CD4-positive, alpha-beta T cell (primary cell): ENCODE measurements at regions of chr5 and their contacts with region 1.

Region 1: GRCh38 chr5:181260387-181261319 is at the start of gene TRIM52:
- DNase-seq: peak; percentile 84 to 96 (median 89)
- ATAC-seq: peak; percentile 73
- H3K4me3 ChIP-seq: peak within 1 kb of the TSS; percentile 85
- H3K4me3 Mint-ChIP-seq: peak within 1 kb of the TSS; percentile 100
- H3K27ac ChIP-seq: peak within 1 kb of the TSS; percentile 98 to 99
- H3K27ac Mint-ChIP-seq: peak within 1 kb of the TSS; percentile 95
- H3K4me1 ChIP-seq: peaks cover 43% of the 10 kb centered on the region
- H3K4me1 Mint-ChIP-seq: peaks cover 54% of the 10 kb centered on the region
- H3K27me3 ChIP-seq: no peaks in the 10 kb centered on the region
- H3K27me3 Mint-ChIP-seq: no peaks in the 10 kb centered on the region
- CTCF ChIP-seq: no peak
- total RNA-seq, gene TRIM52: 35.9 to 37.6 TPM

Region 2: GRCh38 chr5:180810210-180810958 is 450.3 kb before region 1 on chr5:
- CTCF ChIA-PET with region 1: no interaction called
- POLR2A ChIA-PET with region 1: interaction called, 10 read pairs
- intact Hi-C with region 1: no loop called
- DNase-seq: peak; percentile 94 to 98 (median 97)
- ATAC-seq: peak; percentile 76
- H3K4me3 ChIP-seq: peak overlapping the region; percentile 80
- H3K4me3 Mint-ChIP-seq: peak overlapping the region; percentile 91
- H3K27ac ChIP-seq: peak overlapping the region; percentile 95 to 98
- H3K27ac Mint-ChIP-seq: peak overlapping the region; percentile 94
- H3K4me1 ChIP-seq: peaks cover 58% of the 10 kb centered on the region
- H3K4me1 Mint-ChIP-seq: peaks cover 87% of the 10 kb centered on the region
- H3K27me3 ChIP-seq: no peaks in the 10 kb centered on the region
- H3K27me3 Mint-ChIP-seq: no peaks in the 10 kb centered on the region
- CTCF ChIP-seq: no peak

Region 3: DNA sequence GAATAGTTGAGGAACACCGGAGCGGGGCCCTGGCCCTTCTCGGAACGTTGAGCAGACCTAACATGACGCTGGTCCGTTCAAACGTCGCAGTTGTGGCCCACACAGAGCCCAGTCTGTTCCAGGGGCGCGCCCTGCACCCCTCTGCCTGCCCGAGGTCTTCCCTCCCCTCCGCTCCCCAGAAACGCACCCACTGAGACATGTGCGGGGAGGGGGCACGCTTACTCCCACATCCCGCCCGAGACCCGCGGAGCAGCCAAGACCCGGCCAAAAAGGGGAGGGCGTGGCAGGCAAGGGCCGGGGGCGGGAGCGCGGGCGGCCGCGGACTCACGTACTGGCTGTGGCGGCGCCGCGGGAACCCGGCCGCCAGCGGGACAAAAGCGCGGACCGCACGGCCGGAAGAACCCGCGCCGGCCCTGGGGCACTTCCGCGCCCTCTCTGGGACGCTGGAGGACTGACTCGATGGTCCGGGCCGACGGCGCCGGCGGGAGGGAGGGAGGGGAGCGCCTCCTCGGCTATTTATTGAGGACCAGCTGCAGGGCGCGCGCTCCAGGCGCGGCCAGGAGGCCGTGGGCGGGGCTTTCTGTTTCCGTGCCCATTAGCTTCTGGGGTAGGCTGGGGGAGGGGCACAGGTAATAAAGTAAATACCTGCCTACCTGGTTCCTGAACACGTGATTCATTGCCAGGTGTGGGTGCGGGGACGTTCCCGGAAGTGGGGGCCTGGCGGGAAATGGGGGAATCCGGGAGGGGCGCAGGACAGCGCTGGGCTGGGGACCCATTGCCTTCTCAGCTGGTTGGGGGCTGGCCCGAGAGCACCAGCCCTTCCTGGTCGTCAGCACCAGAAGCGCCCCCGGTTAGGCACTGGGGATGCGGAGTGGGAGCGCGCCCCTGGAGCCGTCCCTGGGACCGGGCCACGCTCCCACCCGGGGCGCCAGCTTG is 399.5 kb before region 1 on chr5 and contains the start of gene ZFP62:
- CTCF ChIA-PET with region 1: no interaction called
- POLR2A ChIA-PET with region 1: no interaction called
- intact Hi-C with region 1: loop called in 1 of 2 experiments (anchors 5 kb)
- DNase-seq: peak; percentile 78 to 94 (median 85)
- ATAC-seq: peak; percentile 73
- H3K4me3 ChIP-seq: peak within 1 kb of the TSS; percentile 89
- H3K4me3 Mint-ChIP-seq: peak within 1 kb of the TSS; percentile 95
- H3K27ac ChIP-seq: peak within 1 kb of the TSS; percentile 85 to 88
- H3K27ac Mint-ChIP-seq: peak within 1 kb of the TSS; percentile 95
- H3K4me1 ChIP-seq: peaks cover 10% of the 10 kb centered on the region
- H3K4me1 Mint-ChIP-seq: peaks cover 27% of the 10 kb centered on the region
- H3K27me3 ChIP-seq: no peaks in the 10 kb centered on the region
- H3K27me3 Mint-ChIP-seq: peaks cover 5% of the 10 kb centered on the region
- CTCF ChIP-seq: peak; percentile 50
- total RNA-seq, gene ZFP62: 22.6 to 24.9 TPM

Region 4: DNA sequence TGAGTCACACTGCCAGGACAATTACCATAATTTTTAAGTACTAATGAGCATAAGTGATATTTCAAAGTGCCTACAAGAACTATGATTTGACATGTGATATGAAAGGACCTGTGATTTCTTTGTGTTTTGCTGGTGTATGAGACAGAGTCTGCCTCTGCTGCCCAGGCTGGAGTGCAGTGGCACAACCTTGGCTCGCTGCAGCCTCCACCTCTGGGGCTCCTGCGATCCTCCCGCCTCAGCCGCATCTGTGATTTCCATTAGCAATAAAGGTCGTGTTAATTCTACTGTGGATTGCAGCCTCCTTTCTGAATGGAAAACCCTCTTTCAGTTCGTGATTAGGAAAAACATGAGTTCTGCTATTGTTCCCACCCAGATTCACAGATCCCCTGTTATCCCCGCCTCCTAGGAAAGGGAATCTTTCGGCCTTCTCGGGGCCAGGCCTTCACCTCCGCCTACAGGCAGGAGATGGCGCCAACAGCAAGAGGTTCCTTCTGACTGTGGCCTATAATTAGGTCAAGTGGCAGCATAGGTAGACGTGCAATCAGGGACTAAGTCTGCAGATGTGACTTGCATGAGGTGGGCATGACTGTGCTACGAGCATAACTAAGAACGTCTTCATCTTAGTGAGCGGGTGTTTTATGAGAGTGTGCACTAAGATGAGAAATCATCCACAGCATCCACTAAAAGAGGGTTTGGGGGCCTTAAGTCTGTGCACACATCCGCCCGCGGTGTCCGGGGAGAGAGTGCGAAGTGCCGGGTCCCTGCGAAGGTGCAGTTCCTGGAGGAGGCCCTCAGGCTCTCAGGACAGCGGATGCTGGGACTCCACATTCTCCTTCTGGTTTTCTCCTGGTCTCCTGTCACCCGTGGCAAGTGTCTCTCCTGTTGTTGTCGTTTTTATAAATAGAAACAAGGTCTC is 78.7 kb before region 1 on chr5:
- CTCF ChIA-PET with region 1: interaction called, 23 read pairs
- POLR2A ChIA-PET with region 1: interaction called, 48 read pairs
- intact Hi-C with region 1: no loop called
- DNase-seq: peak; percentile 46 to 88 (median 58)
- ATAC-seq: peak; percentile 59
- H3K4me3 ChIP-seq: no peak overlapping the region
- H3K4me3 Mint-ChIP-seq: peak overlapping the region; percentile 86
- H3K27ac ChIP-seq: no peak overlapping the region
- H3K27ac Mint-ChIP-seq: peak overlapping the region; percentile 86
- H3K4me1 ChIP-seq: peaks cover 30% of the 10 kb centered on the region
- H3K4me1 Mint-ChIP-seq: peaks cover 40% of the 10 kb centered on the region
- H3K27me3 ChIP-seq: no peaks in the 10 kb centered on the region
- H3K27me3 Mint-ChIP-seq: no peaks in the 10 kb centered on the region
- CTCF ChIP-seq: peak; percentile 87

Region 5: DNA sequence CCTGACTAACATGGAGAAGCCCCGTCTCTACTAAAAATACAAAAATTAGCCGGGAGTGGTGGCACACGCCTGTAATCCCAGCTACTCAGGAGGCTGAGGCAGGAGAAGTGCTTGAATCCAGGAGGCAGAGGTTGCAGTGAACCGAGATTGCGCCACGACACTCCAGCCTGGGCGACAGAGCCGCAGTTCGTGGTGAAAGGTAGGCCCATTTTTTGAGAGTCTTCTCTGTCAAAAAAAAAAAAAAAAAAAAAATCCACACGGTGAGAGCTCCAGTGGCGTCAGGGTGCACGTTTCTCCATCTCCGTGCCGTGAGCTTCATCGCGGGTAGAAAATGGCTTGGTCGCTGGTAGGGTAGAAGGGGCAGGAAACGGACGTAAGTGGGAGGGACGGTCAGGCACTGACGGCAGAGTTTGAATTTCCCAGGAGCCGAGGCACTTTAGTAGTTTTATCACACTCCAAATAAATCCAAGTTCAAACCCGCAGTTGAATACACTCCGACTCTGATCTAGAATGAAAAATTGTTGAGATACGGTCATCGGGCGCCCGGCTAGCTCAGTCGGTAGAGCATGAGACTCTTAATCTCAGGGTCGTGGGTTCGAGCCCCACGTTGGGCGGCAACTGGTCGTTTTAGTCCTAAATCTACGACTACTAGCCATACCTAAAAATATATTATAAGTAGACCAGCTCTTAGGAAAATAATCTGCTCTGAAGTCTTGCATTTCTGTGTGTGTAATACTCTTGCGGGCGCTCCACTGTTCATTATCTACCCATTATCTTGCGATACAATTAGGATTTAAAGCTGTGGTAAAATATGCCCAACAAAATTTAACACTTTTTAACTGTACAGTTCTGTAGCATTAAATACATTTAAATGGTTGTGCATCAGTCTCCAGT is 53.2 kb before region 1 on chr5:
- CTCF ChIA-PET with region 1: interaction called, 3 read pairs
- POLR2A ChIA-PET with region 1: interaction called, 67 read pairs
- intact Hi-C with region 1: no loop called
- DNase-seq: peak; percentile 49 to 94 (median 62)
- ATAC-seq: peak; percentile 63
- H3K4me3 ChIP-seq: peak overlapping the region; percentile 59
- H3K4me3 Mint-ChIP-seq: peak overlapping the region; percentile 95
- H3K27ac ChIP-seq: peak overlapping the region; percentile 22 to 49
- H3K27ac Mint-ChIP-seq: peak overlapping the region; percentile 99
- H3K4me1 ChIP-seq: peaks cover 39% of the 10 kb centered on the region
- H3K4me1 Mint-ChIP-seq: peaks cover 41% of the 10 kb centered on the region
- H3K27me3 ChIP-seq: peaks cover 0 to 9% of the 10 kb centered on the region in 2 experiments
- H3K27me3 Mint-ChIP-seq: peaks cover 29% of the 10 kb centered on the region
- CTCF ChIP-seq: no peak

Region 6: DNA sequence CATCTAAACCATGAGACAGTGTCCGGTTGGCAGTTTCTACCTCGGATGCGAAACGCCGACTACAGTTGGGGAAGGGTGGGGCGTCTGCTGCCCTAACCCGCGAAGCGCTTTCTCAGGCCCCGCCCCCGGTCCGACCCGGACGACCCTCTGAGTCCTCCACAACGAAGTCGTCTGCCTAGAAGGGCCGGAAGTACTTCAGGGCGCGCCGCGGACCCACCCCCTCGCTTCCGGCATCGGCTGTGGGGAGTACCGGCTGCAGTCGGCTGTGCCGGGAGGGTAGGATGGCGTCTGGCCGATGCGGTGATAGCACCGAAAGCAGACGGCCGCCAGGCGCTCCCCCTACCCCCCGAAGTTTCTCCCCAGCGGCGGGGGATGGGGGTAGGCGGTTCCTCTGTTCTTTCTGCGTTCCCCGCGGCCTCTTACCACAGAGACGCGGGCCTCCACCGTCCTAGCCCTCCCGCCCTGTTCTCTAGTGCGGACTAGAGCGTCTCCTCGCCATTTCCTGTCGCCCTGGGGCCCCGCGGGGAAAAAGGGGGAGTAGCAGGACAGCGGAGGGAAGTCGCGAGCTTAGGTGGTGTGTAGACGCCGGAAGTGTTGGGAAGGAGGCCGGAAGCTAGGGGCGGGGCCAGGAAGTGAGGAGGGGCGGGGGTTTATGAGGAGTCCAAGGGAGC is 37.5 kb before region 1 on chr5 and contains the start of gene TRIM41:
- CTCF ChIA-PET with region 1: interaction called, 4 read pairs
- POLR2A ChIA-PET with region 1: interaction called, 159 read pairs
- intact Hi-C with region 1: loop called (anchors 1 kb)
- DNase-seq: peak; percentile 94 to 98 (median 97)
- ATAC-seq: peak; percentile 61
- H3K4me3 ChIP-seq: peak within 1 kb of the TSS; percentile 80
- H3K4me3 Mint-ChIP-seq: peak within 1 kb of the TSS; percentile 96
- H3K27ac ChIP-seq: peak within 1 kb of the TSS; percentile 97 to 99
- H3K27ac Mint-ChIP-seq: peak within 1 kb of the TSS; percentile 99
- H3K4me1 ChIP-seq: peaks cover 64% of the 10 kb centered on the region
- H3K4me1 Mint-ChIP-seq: peaks cover 51% of the 10 kb centered on the region
- H3K27me3 ChIP-seq: no peaks in the 10 kb centered on the region
- H3K27me3 Mint-ChIP-seq: peaks cover 23% of the 10 kb centered on the region
- CTCF ChIP-seq: no peak
- total RNA-seq, gene TRIM41: 21.4 to 24.0 TPM

Region 7: DNA sequence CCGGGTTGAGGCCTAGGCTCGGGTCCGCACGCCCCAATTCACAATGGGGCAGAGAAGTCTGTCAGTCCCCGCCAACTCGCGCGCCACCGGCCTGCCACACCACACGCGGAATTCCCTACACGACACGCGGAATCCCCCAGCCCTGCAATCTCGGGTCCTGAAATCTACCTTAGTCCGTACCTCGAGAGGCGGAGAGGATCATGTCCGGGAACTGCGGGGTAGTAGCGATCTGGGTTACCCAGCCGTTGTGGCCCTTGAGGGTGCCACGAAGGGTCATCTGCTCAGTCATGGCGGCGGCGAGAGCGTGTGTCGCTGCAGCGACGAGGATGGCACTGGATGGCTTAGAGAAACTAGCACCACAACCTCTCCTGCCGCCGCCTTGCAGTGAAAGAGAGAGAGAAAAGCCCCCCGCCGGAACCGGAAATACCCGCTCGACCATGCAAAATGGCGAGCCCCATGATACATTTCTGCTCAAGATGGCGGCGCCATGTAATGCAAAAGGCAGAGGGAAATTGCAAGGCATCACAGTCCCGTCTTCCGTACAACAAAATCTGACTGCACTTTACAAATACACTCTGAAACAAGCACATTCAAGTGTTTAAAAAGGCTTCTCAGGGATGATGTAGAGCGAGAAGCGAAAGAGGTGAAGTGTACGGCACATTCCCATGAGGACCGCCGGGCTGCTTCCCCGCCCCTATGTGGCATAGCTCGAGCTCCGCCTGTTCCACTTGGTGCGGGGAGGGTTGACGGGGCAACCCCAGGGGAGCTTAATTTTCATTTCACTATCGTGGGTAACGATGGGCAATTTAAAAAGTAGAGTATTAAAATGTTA is 16.9 kb before region 1 on chr5 and contains the start of gene RACK1:
- CTCF ChIA-PET with region 1: interaction called, 3 read pairs
- POLR2A ChIA-PET with region 1: interaction called, 244 read pairs
- intact Hi-C with region 1: loop called (anchors 1 kb)
- DNase-seq: peak; percentile 84 to 95 (median 88)
- ATAC-seq: peak; percentile 75
- H3K4me3 ChIP-seq: peak within 1 kb of the TSS; percentile 94
- H3K4me3 Mint-ChIP-seq: peak within 1 kb of the TSS; percentile 95
- H3K27ac ChIP-seq: peak within 1 kb of the TSS; percentile 81 to 90
- H3K27ac Mint-ChIP-seq: peak within 1 kb of the TSS; percentile 96
- H3K4me1 ChIP-seq: peaks cover 87% of the 10 kb centered on the region
- H3K4me1 Mint-ChIP-seq: peaks cover 76% of the 10 kb centered on the region
- H3K27me3 ChIP-seq: no peaks in the 10 kb centered on the region
- H3K27me3 Mint-ChIP-seq: no peaks in the 10 kb centered on the region
- CTCF ChIP-seq: no peak
- total RNA-seq, gene RACK1: 2,499 to 2,682 TPM